ENCODE measurements at regions of chr9 and their contacts with region 1.

Region 1: DNA sequence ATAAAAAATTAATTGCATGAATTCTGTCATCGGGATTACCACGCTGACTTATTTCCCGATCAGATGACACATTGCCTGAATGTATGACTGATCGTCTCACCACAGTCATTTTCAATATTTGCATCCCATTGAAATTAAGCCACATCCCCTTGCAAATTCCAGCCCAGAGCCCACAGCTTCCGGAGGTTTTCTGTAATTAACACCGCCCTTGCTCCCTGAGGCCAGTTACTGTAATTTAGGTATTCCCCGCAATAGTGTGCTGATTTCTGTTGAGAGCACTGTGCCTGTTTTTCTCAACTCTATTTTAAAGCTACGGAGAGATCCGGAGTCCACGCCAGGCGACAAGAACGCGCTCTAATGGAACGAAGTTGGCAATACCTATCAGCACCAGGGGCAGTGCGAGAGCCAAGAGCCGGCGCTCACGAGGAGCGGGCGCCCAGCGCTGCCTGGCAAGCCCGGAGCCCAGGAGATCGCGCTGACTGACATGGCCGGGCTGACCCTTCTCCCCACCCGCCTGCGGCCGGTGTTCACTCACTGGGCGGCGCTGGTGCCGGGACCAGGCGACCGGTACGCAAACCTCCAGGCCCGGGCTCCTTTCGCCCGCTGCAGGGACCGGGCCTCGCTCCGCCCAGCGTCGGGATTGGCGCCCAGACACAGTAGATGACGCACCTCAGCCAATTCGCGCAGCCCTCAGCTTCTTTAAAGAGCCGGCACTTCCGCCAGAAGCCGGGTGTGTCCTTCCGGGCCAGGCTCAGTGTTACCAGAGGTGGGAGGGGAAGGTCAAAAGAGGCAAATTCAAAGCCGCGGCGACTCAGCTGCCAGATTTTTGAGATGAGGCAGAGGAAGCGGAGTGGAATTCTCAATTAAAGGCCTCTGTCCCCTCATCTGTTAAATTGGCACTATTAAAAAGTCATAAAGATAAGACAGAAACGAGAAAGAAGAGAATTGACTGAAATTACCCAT is at the start of gene PLGRKT:
- DNase-seq: peak; percentile 96
- ATAC-seq: peak; percentile 98
- H3K4me3 Mint-ChIP-seq: peak within 1 kb of the TSS; percentile 93
- H3K27ac Mint-ChIP-seq: peak within 1 kb of the TSS; percentile 93
- H3K4me1 Mint-ChIP-seq: peaks cover 35% of the 10 kb centered on the region
- H3K27me3 Mint-ChIP-seq: no peaks in the 10 kb centered on the region
- total RNA-seq, gene PLGRKT: 29.8 to 31.5 TPM

Region 2: DNA sequence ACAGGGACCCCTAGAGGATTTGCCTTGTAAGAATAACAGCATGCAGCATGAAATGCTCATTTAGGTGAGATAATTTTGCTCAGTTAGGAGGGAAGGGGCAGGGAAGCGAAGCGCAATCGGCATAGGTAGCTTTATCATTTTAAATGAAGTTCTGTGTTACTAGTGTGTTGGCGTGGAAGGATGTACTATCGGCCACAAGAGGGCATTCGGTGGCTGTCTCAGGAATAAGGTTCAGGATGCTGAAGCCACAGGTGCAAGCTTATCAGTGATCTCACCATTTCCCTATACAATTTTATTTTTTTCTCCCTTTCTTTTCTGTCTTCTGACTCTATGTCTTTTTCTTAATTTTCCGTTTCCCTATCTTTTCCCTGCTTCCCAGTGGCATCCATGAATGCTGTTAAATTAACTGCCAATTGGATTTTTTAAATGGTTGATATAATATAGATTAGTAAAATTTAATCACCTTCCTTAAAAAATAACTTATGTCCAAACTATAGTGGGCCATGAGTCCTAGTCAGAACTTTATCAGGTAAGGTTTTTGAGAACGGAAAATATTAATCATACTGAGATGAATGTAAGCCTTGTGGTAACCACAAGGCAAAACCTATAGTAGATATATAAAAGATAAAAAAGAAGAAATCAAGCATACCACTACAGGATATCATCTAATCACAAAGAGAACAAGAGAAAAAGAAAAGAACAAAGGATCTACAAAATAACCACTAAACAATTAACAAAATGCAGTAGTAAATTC is 250.9 kb before region 1 on chr9:
- CTCF ChIA-PET with region 1: interaction called, 64 read pairs
- DNase-seq: peak; percentile 76
- ATAC-seq: peak; percentile 82
- H3K4me3 Mint-ChIP-seq: no peak overlapping the region
- H3K27ac Mint-ChIP-seq: no peak overlapping the region
- H3K4me1 Mint-ChIP-seq: peaks cover 21% of the 10 kb centered on the region
- H3K27me3 Mint-ChIP-seq: no peaks in the 10 kb centered on the region

Region 3: GRCh38 chr9:5310851-5311250 is 126.7 kb before region 1 on chr9:
- CTCF ChIA-PET with region 1: no interaction called
- DNase-seq: no peak
- ATAC-seq: no peak
- H3K4me3 Mint-ChIP-seq: no peak overlapping the region
- H3K27ac Mint-ChIP-seq: no peak overlapping the region
- H3K4me1 Mint-ChIP-seq: peaks cover 10% of the 10 kb centered on the region
- H3K27me3 Mint-ChIP-seq: no peaks in the 10 kb centered on the region

Region 4: DNA sequence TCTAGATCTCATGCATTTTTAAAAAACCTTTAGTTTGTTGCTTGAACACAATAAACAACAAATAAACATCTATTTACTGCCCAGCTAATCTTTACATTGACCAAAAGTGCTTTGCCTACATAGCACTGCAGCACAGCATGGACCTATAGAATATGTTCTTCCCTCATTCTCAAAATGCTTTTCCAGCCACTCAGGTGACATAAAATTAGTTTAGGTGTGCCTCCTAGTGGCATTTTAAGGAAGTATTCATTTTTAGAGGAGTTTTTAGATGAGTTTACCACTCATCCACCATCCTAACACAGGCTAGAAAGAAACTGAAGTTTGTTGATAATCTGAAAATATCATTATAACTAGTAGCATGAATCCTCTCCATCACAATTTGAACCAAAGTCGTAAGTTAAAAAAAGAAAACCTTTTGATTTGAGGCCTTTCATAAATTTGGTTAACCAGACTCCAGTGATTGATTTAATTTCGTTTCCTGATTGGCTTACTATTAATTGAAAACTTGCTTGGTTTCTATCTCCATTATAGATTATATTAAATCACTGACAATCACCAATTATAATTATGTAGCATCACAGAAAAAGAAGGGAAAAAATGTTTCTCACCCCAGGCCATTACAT is 12.4 kb before region 1 on chr9:
- CTCF ChIA-PET with region 1: interaction called, 24 read pairs
- DNase-seq: no peak
- ATAC-seq: peak; percentile 39
- H3K4me3 Mint-ChIP-seq: no peak overlapping the region
- H3K27ac Mint-ChIP-seq: no peak overlapping the region
- H3K4me1 Mint-ChIP-seq: peaks cover 4% of the 10 kb centered on the region
- H3K27me3 Mint-ChIP-seq: no peaks in the 10 kb centered on the region

Region 5: GRCh38 chr9:5450359-5451091 is 13.0 kb after region 1 on chr9 and contains the start of gene CD274:
- CTCF ChIA-PET with region 1: interaction called, 23 read pairs
- DNase-seq: peak; percentile 92
- ATAC-seq: peak; percentile 93
- H3K4me3 Mint-ChIP-seq: peak within 1 kb of the TSS; percentile 95
- H3K27ac Mint-ChIP-seq: peak within 1 kb of the TSS; percentile 97
- H3K4me1 Mint-ChIP-seq: peaks cover 71% of the 10 kb centered on the region
- H3K27me3 Mint-ChIP-seq: no peaks in the 10 kb centered on the region
- total RNA-seq, gene CD274: 8.3 to 10.4 TPM

Region 6: DNA sequence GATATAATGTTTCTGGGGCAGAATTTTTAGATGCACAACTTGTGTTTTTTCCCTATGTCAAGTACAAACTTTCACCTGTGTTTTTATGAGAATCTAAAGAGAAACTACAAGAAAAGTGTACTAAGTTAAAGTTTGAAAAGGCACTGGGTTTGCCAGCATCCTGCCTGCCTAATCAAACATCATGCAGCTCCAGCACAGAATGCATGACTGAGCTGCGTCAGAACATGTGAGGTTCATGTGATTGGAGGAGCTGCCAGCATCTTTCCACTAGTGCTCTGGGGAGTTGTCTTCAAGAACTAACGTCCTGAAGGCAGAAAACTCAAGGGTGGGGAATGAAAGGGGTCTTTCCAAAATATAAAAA is 145.3 kb after region 1 on chr9:
- CTCF ChIA-PET with region 1: interaction called, 38 read pairs
- DNase-seq: peak; percentile 57
- ATAC-seq: peak; percentile 40
- H3K4me3 Mint-ChIP-seq: no peak overlapping the region
- H3K27ac Mint-ChIP-seq: peak overlapping the region; percentile 56
- H3K4me1 Mint-ChIP-seq: peaks cover 55% of the 10 kb centered on the region
- H3K27me3 Mint-ChIP-seq: no peaks in the 10 kb centered on the region

Measured in activated CD8-positive, alpha-beta memory T cell treated with anti-CD3 and anti-CD28 coated beads, Interleukin-2, amount 10 ng/mL, durations not matched to agents 7 days and 5 days (primary cell).